GM18951 (cell line): ENCODE measurements at regions of chr7 and their contacts with region 1.

Region 1: DNA sequence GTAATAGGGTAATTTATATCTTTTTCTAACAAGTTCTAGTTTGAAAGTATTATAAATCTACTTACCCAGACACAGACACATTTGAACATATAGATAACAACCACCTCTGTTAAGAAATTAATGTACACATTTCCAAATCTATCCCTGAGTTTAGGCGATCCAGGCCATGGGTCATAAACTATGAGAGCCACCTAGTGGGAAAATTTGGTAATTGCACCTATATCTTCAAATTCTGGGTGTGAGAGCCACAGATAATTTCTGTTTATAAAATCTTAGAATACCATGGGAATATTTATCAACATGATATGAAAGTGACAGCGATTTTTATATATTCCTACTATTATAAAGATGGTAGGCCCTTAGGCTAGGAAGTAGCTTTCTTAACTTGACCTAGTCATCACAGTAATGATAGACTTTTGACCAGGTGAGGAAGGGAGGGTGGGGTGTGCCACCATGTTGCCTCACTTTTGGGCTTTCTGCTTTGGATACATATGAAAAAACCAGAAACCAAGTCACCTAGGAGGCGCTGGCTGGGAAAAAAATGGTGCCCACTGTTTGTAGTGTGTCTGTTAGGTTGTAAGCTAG is 8.0 kb upstream of the EPHA1 start:
- POLR2A ChIP-seq: no peak

Region 2: DNA sequence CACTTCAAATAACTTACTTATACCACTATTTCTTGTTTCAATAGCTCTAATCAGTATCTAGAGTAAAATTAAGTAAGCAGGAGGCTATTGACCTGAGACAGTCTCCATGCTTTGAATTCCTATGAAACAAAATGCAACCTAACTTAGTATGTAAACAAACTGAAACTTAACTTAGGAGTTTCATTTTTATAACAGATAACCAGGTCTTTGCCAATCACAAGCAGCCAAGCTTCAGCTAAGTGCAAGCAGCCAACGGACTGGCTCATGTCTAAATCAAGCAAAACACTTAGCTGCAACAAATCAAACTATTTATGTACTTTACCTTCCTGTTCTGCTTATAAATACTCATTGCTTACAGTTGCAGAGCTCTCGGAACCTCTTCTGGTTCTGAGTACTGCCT is 157.8 kb before region 1 on chr7:
- in situ Hi-C with region 1: loop called (anchors 10 kb)
- POLR2A ChIP-seq: no peak